Naive thymus-derived CD4-positive, alpha-beta T cell (primary cell): ENCODE measurements at regions of chr5 and their contacts with region 1.

Region 1: DNA sequence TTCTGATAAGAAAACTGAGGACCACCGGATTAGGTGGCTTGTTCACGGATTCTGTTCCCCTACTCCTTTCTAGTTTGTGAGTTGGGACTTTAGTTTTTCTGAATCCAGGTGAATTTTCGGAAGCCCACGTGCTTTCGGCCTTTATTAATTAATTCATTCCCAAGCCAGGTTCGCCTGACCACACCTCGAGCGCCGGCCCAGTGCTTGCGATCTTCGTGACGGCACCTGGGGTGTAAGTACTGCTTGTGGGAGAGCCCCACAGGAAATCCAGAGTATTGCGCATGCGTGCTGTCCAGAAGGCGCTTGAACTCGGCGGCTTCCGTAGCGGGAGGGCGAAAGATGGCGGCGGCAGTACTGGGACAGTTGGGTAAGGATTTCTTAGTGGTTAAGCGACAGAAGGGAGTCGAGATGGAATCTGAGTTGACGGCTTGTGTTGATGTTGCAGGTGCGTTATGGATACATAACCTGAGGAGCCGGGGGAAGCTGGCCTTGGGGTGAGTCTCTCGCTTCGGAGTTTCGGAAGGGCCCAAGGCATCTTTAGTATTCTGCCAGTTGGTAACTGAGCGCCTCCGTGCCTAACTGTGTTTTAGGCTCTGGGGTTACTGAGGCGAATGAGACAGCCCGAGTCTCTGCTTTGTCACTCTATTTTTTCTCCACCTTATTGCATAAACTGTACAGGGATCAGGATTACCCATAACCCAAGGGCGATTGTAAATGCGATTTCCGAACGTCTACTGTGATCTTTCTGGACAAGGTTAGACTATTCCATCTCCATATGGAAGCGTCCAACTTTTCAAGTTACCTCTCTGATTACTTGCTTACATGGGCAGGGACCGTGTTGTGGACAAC is at the start of gene MRPL22:
- DNase-seq: peak; percentile 85 to 99 (median 94)
- ATAC-seq: peak; percentile 84
- H3K4me3 ChIP-seq: peak within 1 kb of the TSS; percentile 76
- H3K4me3 Mint-ChIP-seq: peak within 1 kb of the TSS; percentile 89 to 100 (median 96)
- H3K27ac ChIP-seq: peak within 1 kb of the TSS; percentile 94
- H3K27ac Mint-ChIP-seq: peak within 1 kb of the TSS; percentile 93 to 98 (median 96)
- H3K4me1 ChIP-seq: peaks cover 22 to 25% of the 10 kb centered on the region in 2 donors
- H3K4me1 Mint-ChIP-seq: peaks cover 23 to 62% (median 47%) of the 10 kb centered on the region in 7 donors
- H3K27me3 ChIP-seq: no peaks in the 10 kb centered on the region
- H3K27me3 Mint-ChIP-seq: no peaks in the 10 kb centered on the region
- total RNA-seq, gene MRPL22: 18.4 to 62.0 (median 24.9) TPM

Region 2: DNA sequence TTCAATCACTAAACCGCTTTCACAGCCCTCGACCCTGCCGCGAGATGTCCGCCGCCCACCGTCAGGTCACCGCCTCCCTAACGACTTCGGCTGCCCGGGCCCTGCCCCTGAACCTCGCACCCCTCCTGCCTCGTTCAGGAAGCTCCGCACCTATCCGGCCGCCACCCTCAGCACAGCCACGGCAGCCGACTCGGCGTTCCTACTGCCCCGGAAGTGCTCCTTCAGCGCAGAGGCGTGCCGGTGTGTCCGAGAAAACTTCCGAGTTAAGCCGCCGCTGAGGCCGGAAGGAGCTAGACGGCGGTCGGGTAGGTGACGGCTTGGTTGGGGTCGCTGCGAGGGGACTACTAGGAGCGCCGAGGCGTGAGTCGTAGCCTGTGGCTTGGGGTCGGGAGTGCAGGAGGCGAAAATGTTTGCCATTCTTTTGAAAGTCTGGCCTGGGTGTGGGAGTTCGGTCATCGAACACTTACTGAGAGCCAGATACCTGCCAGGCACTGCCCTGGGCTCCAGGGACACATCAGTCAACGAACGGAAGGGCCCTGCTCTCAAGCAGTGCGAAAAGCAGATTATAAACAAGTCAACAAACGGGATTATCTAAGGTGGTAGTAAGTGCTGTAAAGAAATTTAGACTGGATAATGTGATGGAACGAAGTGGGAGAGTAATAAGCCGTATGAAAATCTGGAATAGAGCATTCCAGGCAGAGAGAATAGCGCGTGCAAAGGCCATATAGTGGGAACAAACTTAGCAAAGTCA is 902.1 kb before region 1 on chr5 and contains the starts of genes FAM114A2 and MFAP3:
- CTCF ChIA-PET with region 1: no interaction called
- POLR2A ChIA-PET with region 1: no interaction called
- intact Hi-C with region 1: loop called (anchors 2 kb)
- DNase-seq: peak; percentile 74 to 87 (median 84)
- ATAC-seq: peak; percentile 98
- H3K4me3 ChIP-seq: peak within 1 kb of the TSS; percentile 93
- H3K4me3 Mint-ChIP-seq: peak within 1 kb of the TSS; percentile 91 to 99 (median 98)
- H3K27ac ChIP-seq: peak within 1 kb of the TSS; percentile 80
- H3K27ac Mint-ChIP-seq: peak within 1 kb of the TSS; percentile 96 to 99 (median 97)
- H3K4me1 ChIP-seq: peaks cover 11 to 21% of the 10 kb centered on the region in 2 donors
- H3K4me1 Mint-ChIP-seq: peaks cover 37 to 78% (median 76%) of the 10 kb centered on the region in 7 donors
- H3K27me3 ChIP-seq: no peaks in the 10 kb centered on the region
- H3K27me3 Mint-ChIP-seq: no peaks in the 10 kb centered on the region
- total RNA-seq, gene FAM114A2: 26.2 to 53.1 (median 37.1) TPM
- total RNA-seq, gene MFAP3: 11.1 to 30.6 (median 28.1) TPM

Region 3: GRCh38 chr5:154162539-154163151 is 778.4 kb before region 1 on chr5:
- CTCF ChIA-PET with region 1: no interaction called
- POLR2A ChIA-PET with region 1: no interaction called
- intact Hi-C with region 1: no loop called
- DNase-seq: no peak
- ATAC-seq: no peak
- H3K4me3 ChIP-seq: no peak overlapping the region
- H3K4me3 Mint-ChIP-seq: no peak overlapping the region
- H3K27ac ChIP-seq: no peak overlapping the region
- H3K27ac Mint-ChIP-seq: peak overlapping the region in 1 of 9 donors; percentile 29
- H3K4me1 ChIP-seq: no peaks in the 10 kb centered on the region
- H3K4me1 Mint-ChIP-seq: no peaks in the 10 kb centered on the region
- H3K27me3 ChIP-seq: no peaks in the 10 kb centered on the region
- H3K27me3 Mint-ChIP-seq: peaks cover 23 to 71% (median 32%) of the 10 kb centered on the region in 5 donors

Region 4: GRCh38 chr5:154445422-154446182 is 495.4 kb before region 1 on chr5 and contains the start of gene SAP30L:
- CTCF ChIA-PET with region 1: no interaction called
- POLR2A ChIA-PET with region 1: no interaction called
- intact Hi-C with region 1: loop called (anchors 1 to 2 kb)
- DNase-seq: peak; percentile 92 to 99 (median 97)
- ATAC-seq: peak; percentile 97
- H3K4me3 ChIP-seq: peak within 1 kb of the TSS; percentile 90
- H3K4me3 Mint-ChIP-seq: peak within 1 kb of the TSS; percentile 94 to 100 (median 99)
- H3K27ac ChIP-seq: peak within 1 kb of the TSS; percentile 83
- H3K27ac Mint-ChIP-seq: peak within 1 kb of the TSS; percentile 88 to 98 (median 95)
- H3K4me1 ChIP-seq: peaks cover 16 to 35% of the 10 kb centered on the region in 2 donors
- H3K4me1 Mint-ChIP-seq: peaks cover 32 to 74% (median 61%) of the 10 kb centered on the region in 7 donors
- H3K27me3 ChIP-seq: no peaks in the 10 kb centered on the region
- H3K27me3 Mint-ChIP-seq: no peaks in the 10 kb centered on the region
- total RNA-seq, gene SAP30L: 31.1 to 45.7 (median 35.9) TPM

Region 5: GRCh38 chr5:154654486-154655371 is 286.3 kb before region 1 on chr5:
- CTCF ChIA-PET with region 1: interaction called, 6 read pairs
- POLR2A ChIA-PET with region 1: no interaction called
- intact Hi-C with region 1: loop called (anchors 1 to 5 kb)
- DNase-seq: no peak
- ATAC-seq: no peak
- H3K4me3 ChIP-seq: no peak overlapping the region
- H3K4me3 Mint-ChIP-seq: peak overlapping the region in 8 of 10 donors; percentile 13 to 60 (median 45)
- H3K27ac ChIP-seq: no peak overlapping the region
- H3K27ac Mint-ChIP-seq: peak overlapping the region in 7 of 9 donors; percentile 13 to 77 (median 56)
- H3K4me1 ChIP-seq: peaks cover 0 to 4% of the 10 kb centered on the region in 2 donors
- H3K4me1 Mint-ChIP-seq: peaks cover 6 to 17% (median 9%) of the 10 kb centered on the region in 7 donors
- H3K27me3 ChIP-seq: no peaks in the 10 kb centered on the region
- H3K27me3 Mint-ChIP-seq: no peaks in the 10 kb centered on the region

Region 6: GRCh38 chr5:155147222-155147621 is 206.2 kb after region 1 on chr5:
- CTCF ChIA-PET with region 1: no interaction called
- POLR2A ChIA-PET with region 1: no interaction called
- intact Hi-C with region 1: loop called in 1 of 2 experiments (anchors 2 kb)
- DNase-seq: no peak
- ATAC-seq: no peak
- H3K4me3 ChIP-seq: no peak overlapping the region
- H3K4me3 Mint-ChIP-seq: no peak overlapping the region
- H3K27ac ChIP-seq: no peak overlapping the region
- H3K27ac Mint-ChIP-seq: no peak overlapping the region
- H3K4me1 ChIP-seq: no peaks in the 10 kb centered on the region
- H3K4me1 Mint-ChIP-seq: peaks cover 0 to 6% (median 0%) of the 10 kb centered on the region in 7 donors
- H3K27me3 ChIP-seq: peaks cover 0 to 3% of the 10 kb centered on the region in 2 donors
- H3K27me3 Mint-ChIP-seq: peaks cover 0 to 10% (median 6%) of the 10 kb centered on the region in 5 donors